CD8-positive, alpha-beta memory T cell (primary cell): ENCODE measurements at regions of chr14 and their contacts with region 1.

Region 1: GRCh38 chr14:52080817-52081755 is 12.2 kb upstream of the NID2 start:
- DNase-seq: no peak
- H3K4me3 ChIP-seq: no peak overlapping the region
- H3K4me3 Mint-ChIP-seq: no peak overlapping the region
- H3K27ac ChIP-seq: no peak overlapping the region
- H3K27ac Mint-ChIP-seq: no peak overlapping the region
- H3K4me1 ChIP-seq: no peaks in the 10 kb centered on the region
- H3K4me1 Mint-ChIP-seq: peaks cover 3 to 7% (median 5%) of the 10 kb centered on the region in 3 donors
- H3K27me3 ChIP-seq: no peaks in the 10 kb centered on the region
- H3K27me3 Mint-ChIP-seq: peaks cover 5 to 39% of the 10 kb centered on the region in 2 donors

Region 2: DNA sequence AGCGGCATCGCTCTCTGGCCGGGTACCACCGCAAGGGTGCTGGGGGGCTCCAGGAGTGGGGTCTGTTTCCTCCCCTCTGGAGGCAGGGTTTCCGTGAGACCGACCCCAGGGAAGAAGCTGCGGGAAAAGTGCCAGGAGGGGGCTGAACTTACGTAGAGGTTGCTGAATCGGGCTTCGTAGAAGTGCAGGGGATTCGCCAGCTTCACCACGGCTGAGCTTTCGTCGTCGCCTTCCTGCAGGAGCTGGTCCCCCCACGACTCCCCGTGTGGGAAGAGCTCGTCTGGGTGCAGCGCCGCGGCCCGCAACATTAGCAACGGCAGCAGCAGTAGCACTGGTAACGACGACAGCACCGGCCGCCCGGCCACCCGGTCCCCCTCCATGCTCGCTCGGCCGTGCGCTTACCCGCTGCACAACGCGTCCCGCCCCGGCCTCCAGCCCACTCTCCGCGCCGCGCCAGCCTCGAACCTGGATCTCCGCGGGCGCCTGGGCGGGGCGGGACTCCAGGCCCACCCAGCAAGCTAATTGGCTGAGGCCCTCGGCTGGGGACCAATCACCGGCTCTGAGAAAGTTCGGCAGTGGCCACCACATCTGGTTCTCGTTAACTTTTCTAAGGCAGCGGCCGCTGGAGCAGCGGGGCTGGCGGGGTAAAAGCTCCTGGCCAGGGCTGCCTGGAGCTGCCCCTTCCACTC is 12.3 kb before region 1 on chr14 and contains the start of gene NID2:
- CTCF ChIA-PET with region 1: interaction called, 14 read pairs
- POLR2A ChIA-PET with region 1: no interaction called
- DNase-seq: peak; percentile 17 to 63 (median 42)
- H3K4me3 ChIP-seq: peak within 1 kb of the TSS; percentile 64
- H3K4me3 Mint-ChIP-seq: peak within 1 kb of the TSS; percentile 60 to 90 (median 79)
- H3K27ac ChIP-seq: no peak within 1 kb of the TSS
- H3K27ac Mint-ChIP-seq: peak within 1 kb of the TSS in 2 of 8 donors; percentile 5 to 12
- H3K4me1 ChIP-seq: peaks cover 18% of the 10 kb centered on the region
- H3K4me1 Mint-ChIP-seq: peaks cover 21 to 35% (median 32%) of the 10 kb centered on the region in 3 donors
- H3K27me3 ChIP-seq: peaks cover 28% of the 10 kb centered on the region
- H3K27me3 Mint-ChIP-seq: peaks cover 29 to 36% of the 10 kb centered on the region in 2 donors
- total RNA-seq, gene NID2: not detected